Caco-2 (cell line): ENCODE measurements at regions of chr18 and their contacts with region 1.

Region 1: GRCh38 chr18:66958309-66958708 is 354.4 kb upstream of the CDH19 start:
- DNase-seq: no peak
- H3K4me3 ChIP-seq: no peak overlapping the region
- H3K4me3 Mint-ChIP-seq: no peak overlapping the region
- H3K27ac Mint-ChIP-seq: no peak overlapping the region
- H3K4me1 ChIP-seq: no peaks in the 10 kb centered on the region
- H3K4me1 Mint-ChIP-seq: no peaks in the 10 kb centered on the region
- H3K27me3 ChIP-seq: no peaks in the 10 kb centered on the region
- H3K27me3 Mint-ChIP-seq: no peaks in the 10 kb centered on the region
- CTCF ChIP-seq: no peak

Region 2: DNA sequence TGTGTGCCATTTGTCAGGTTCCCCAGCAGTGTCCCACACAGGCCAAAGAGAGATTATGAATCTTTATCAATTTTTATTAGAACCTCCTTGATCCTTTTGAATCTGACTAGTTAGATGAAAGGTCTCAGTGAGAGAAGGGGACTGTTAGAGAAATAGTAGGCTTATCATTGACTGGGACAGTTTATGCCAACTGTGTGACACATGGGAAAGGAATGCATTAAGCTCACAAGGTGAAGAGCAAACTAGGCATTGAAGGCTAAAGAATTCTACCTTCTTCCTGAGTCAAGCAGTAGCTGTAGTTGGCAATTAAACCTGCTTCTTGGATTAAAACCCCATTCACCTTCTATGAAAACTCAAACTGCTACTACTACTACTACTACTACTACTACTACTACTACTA is 35.2 kb after region 1 on chr18:
- CTCF ChIA-PET with region 1: interaction called, 15 read pairs
- POLR2A ChIA-PET with region 1: no interaction called
- intact Hi-C with region 1: no loop called
- DNase-seq: peak in 1 of 2 experiments; percentile 1
- H3K4me3 ChIP-seq: no peak overlapping the region
- H3K4me3 Mint-ChIP-seq: no peak overlapping the region
- H3K27ac Mint-ChIP-seq: no peak overlapping the region
- H3K4me1 ChIP-seq: no peaks in the 10 kb centered on the region
- H3K4me1 Mint-ChIP-seq: no peaks in the 10 kb centered on the region
- H3K27me3 ChIP-seq: no peaks in the 10 kb centered on the region
- H3K27me3 Mint-ChIP-seq: no peaks in the 10 kb centered on the region
- CTCF ChIP-seq: no peak

Region 3: DNA sequence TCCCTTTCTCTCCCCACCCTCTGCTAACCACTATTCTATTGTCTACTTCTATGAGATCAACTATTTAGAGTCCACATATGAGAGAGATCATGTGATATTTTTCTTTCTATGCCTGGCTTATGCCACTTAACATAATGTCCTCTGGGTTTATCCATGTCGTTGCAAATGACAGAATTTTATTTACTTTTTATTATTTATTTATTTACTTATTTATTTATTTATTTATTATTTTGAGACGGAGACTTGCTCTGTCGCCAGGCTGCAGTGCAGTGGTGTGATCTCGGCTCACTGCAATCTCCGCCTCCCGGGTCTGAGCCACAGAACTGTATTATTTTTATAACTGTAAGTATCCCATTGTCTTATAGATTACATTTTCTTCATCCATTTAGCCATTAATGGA is 89.0 kb after region 1 on chr18:
- CTCF ChIA-PET with region 1: no interaction called
- POLR2A ChIA-PET with region 1: no interaction called
- intact Hi-C with region 1: no loop called
- DNase-seq: no peak
- H3K4me3 ChIP-seq: no peak overlapping the region
- H3K4me3 Mint-ChIP-seq: no peak overlapping the region
- H3K27ac Mint-ChIP-seq: no peak overlapping the region
- H3K4me1 ChIP-seq: no peaks in the 10 kb centered on the region
- H3K4me1 Mint-ChIP-seq: no peaks in the 10 kb centered on the region
- H3K27me3 ChIP-seq: no peaks in the 10 kb centered on the region
- H3K27me3 Mint-ChIP-seq: no peaks in the 10 kb centered on the region
- CTCF ChIP-seq: no peak